ENCODE measurements at regions of chr10 and their contacts with region 1.

Region 1: DNA sequence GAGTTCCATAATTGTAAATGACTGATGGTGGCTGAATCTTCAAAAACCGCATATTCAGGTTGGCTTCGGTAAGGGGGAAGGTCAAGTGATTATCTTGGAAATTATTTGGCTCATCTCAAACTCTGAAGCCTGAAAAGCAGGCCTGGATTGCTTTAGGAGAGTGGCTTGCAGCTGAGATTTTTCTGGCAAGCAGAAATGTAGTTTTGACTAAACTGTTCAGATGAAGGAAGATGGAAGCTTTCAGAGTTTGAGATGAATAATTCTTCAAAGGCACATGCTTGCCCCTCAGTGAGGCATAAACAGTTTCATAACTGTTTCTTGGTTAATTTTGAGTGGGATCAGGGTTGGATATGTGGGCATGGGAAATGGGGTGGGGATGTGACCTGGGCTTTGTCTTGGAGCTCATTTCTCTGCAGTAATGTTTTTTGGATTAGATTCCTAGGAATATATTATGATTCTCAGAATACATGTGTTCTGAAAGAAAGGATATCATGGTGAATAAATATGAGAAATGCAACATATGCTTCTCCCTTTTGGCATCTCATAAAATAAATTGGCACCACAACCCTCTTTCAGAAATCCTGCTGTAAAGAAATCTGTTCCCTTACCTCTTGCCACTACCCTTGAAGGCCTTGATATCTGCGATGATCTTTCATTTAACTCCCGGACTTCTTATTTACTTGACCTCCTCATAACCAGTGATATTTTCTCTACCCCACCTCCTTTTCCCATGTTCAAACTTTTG is 469.2 kb downstream of the ADRA2A start:
- DNase-seq: no peak
- H3K4me3 ChIP-seq: no peak overlapping the region
- H3K27ac ChIP-seq: no peak overlapping the region
- H3K4me1 ChIP-seq: no peaks in the 10 kb centered on the region
- H3K27me3 ChIP-seq: no peaks in the 10 kb centered on the region
- CTCF ChIP-seq: no peak
- POLR2A ChIP-seq: no peak

Region 2: DNA sequence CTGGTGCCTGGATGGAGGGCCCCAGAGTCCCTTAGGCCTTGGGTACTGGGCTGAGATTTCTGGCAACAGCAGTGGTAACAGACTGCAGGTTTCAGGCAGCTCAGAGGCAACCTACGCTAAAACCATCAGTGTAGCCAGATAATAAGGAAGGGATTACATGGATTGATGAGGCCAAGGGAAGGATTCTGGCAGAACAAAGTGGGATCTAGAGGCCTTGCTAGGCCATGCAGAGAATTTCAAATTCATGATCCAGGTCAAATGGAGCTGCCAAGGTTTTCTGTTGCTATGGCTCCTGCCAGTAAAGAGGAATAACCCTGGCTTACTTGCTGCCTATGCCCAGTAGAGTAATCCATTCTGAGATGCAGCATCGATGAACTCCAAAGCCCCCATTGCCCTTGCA is 23.5 kb before region 1 on chr10:
- intact Hi-C with region 1: loop called (anchors 2 kb)
- DNase-seq: no peak
- H3K4me3 ChIP-seq: no peak overlapping the region
- H3K27ac ChIP-seq: no peak overlapping the region
- H3K4me1 ChIP-seq: no peaks in the 10 kb centered on the region
- H3K27me3 ChIP-seq: no peaks in the 10 kb centered on the region
- CTCF ChIP-seq: no peak
- POLR2A ChIP-seq: no peak

Measured in breast epithelium (tissue), 4 donors.